ENCODE measurements at regions of chr3 and their contacts with region 1.

Region 1: GRCh38 chr3:138941259-138941885 is 5.6 kb downstream of the FOXL2 start:
- DNase-seq: peak; percentile 66
- H3K4me3 Mint-ChIP-seq: no peak overlapping the region
- H3K27ac Mint-ChIP-seq: no peak overlapping the region
- H3K4me1 Mint-ChIP-seq: no peaks in the 10 kb centered on the region
- H3K27me3 Mint-ChIP-seq: peaks cover 27% of the 10 kb centered on the region
- CTCF ChIP-seq: peak; percentile 53

Region 2: DNA sequence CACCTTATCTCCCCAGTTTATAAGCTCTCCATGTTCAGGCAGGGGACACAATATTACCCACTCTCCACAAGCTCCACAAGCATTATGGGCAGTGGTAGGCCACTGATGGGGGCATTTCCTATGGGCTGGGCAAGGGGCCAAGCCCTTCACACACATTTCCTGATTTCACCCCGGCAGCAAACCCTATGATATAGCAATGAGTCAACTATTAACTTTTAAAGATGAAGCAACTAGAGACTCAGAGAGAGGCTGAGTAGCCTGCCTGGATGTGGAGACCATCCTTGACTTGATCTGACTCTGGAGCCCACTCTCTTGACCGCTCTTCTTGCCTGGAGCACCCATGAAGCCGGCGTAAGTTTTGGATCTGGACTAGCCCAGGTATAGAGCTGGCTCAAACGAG is 33.1 kb after region 1 on chr3:
- CTCF ChIA-PET with region 1: interaction called, 6 read pairs
- POLR2A ChIA-PET with region 1: no interaction called
- intact Hi-C with region 1: loop called (anchors 2 kb)
- DNase-seq: peak; percentile 54
- H3K4me3 Mint-ChIP-seq: no peak overlapping the region
- H3K27ac Mint-ChIP-seq: no peak overlapping the region
- H3K4me1 Mint-ChIP-seq: no peaks in the 10 kb centered on the region
- H3K27me3 Mint-ChIP-seq: peaks cover 8% of the 10 kb centered on the region
- CTCF ChIP-seq: no peak

Region 3: DNA sequence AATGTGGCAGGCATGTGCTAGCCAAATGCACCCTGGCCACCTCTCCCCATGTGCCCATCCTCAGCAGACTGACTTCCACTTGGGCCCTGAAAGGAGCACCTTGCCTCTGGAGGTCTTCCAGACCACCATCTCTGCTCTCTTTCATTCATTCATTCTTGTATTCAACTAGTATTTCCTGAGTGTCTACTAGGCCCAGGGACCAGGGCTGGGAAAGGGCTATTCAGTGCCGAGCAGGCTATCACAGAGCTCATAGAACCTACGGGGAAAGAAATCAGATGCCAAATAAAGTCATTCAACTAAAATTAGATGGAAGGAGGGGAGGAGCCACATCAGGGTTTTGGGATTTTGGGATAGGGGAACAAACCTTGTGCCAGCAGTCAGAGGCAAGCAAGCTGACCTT is 45.8 kb after region 1 on chr3:
- CTCF ChIA-PET with region 1: no interaction called
- POLR2A ChIA-PET with region 1: no interaction called
- intact Hi-C with region 1: no loop called
- DNase-seq: no peak
- H3K4me3 Mint-ChIP-seq: no peak overlapping the region
- H3K27ac Mint-ChIP-seq: no peak overlapping the region
- H3K4me1 Mint-ChIP-seq: no peaks in the 10 kb centered on the region
- H3K27me3 Mint-ChIP-seq: peaks cover 15% of the 10 kb centered on the region
- CTCF ChIP-seq: no peak

Measured in MCF 10A (cell line).